Activated CD4-positive, alpha-beta memory T cell treated with anti-CD3 and anti-CD28 coated beads, Interleukin-2, amount 10 ng/mL, durations not matched to agents 7 days and 5 days (primary cell): ENCODE measurements at regions of chr15 and their contacts with region 1.

Region 1: GRCh38 chr15:22224241-22224671 is 143.9 kb downstream of the OR4M2 start:
- DNase-seq: no peak
- H3K4me3 Mint-ChIP-seq: no peak overlapping the region
- H3K27ac Mint-ChIP-seq: no peak overlapping the region
- H3K4me1 Mint-ChIP-seq: peaks cover 27% of the 10 kb centered on the region
- H3K27me3 Mint-ChIP-seq: peaks cover 4% of the 10 kb centered on the region

Region 2: GRCh38 chr15:20356444-20356910 is 1867.8 kb before region 1 on chr15:
- CTCF ChIA-PET with region 1: interaction called, 101 read pairs
- POLR2A ChIA-PET with region 1: interaction called, 3 read pairs
- DNase-seq: peak; percentile 79
- H3K4me3 Mint-ChIP-seq: no peak overlapping the region
- H3K27ac Mint-ChIP-seq: no peak overlapping the region
- H3K4me1 Mint-ChIP-seq: peaks cover 10% of the 10 kb centered on the region
- H3K27me3 Mint-ChIP-seq: peaks cover 2% of the 10 kb centered on the region

Region 3: GRCh38 chr15:22253676-22254408 is 29.6 kb after region 1 on chr15:
- CTCF ChIA-PET with region 1: no interaction called
- POLR2A ChIA-PET with region 1: no interaction called
- DNase-seq: peak; percentile 30
- H3K4me3 Mint-ChIP-seq: no peak overlapping the region
- H3K27ac Mint-ChIP-seq: no peak overlapping the region
- H3K4me1 Mint-ChIP-seq: peaks cover 21% of the 10 kb centered on the region
- H3K27me3 Mint-ChIP-seq: peaks cover 1% of the 10 kb centered on the region

Region 4: DNA sequence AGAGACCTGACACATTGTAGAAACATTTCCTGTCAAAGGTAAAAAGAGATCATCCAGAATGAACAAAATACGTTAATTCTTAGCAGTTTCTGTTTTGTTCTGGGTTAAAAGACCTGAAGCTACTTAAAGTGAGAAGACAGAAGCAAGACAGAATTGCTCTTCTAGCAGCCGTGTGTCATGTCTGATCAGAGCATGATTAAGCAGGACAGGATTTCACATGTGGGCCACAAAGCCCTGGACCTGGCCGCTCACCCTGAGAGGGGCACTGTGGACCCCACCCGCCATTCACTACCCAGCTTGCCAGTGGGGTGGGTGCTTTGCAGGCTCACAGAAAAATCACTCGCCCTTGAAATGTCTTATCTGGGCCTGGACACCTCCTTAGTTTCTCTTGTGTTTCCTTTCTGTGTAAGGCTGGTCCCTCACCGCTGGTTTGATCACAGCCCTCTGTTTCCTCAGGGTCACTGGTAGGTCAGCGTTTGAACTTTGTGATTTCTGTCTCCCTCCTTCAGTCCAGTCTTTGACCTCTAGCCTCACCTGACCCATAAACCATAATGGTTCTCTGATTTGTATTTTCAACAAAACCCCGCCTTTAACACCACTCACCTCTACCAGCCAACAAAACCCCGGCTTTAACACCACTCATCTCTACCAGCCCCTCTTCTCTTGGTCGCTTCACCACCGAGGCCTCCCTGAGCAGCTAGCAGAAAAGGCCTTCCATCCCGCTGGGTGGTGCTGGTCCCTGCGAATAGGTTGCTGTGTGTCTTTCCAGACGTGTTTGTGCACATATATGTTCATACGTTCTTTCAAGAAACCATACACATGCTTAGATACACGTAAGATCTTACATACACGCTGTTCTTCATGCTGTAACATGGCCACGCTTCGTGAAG is 41.0 kb after region 1 on chr15:
- CTCF ChIA-PET with region 1: interaction called, 14 read pairs
- POLR2A ChIA-PET with region 1: interaction called, 8 read pairs
- DNase-seq: peak; percentile 26
- H3K4me3 Mint-ChIP-seq: no peak overlapping the region
- H3K27ac Mint-ChIP-seq: no peak overlapping the region
- H3K4me1 Mint-ChIP-seq: peaks cover 10% of the 10 kb centered on the region
- H3K27me3 Mint-ChIP-seq: no peaks in the 10 kb centered on the region